HCT116 (cell line): ENCODE measurements at regions of chr9 and their contacts with region 1.

Region 1: DNA sequence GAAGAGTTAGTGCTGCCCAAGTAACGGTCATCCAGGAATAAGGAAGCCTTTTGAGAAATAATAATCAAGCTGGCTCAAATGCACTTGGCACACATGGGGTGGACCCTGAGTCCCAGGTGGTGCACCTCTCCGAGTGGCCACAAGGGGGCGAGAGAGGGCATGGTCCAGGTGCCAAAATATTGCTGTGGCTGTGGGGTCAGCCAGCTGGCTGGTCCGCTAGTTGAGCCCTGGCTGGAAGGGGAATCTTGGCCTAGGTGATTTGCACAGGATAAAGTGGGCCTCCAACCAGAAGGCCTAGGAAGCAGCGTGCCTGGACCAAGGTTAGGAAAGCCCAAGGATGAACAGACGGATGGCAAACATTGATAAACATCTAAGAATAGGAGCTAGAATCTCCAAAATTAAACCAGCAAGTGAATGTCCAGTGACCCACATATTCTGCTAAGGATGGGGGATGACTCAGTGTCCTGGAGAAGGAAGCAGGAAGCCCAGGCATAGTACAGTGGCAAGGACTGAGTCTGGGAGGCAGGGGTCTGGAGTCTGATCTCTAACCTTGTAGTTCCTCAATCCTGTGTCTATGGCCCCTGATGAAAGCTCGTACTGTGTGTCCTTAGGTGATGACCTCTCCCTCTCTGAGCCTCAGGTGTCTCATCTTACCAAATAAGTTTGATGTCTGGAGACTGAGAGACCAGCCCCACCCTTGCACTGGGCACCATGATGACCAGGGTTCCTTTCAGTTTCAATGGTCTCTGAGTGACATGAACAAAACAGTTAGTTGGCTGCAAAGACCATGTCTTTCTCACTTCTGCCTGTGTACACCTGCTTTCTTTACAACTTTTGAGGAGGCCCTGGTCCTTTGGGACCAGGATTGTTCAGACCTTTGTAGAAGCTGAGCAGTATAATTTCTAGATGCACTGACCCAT is 19.2 kb upstream of the SHB start:
- DNase-seq: peak; percentile 24
- ATAC-seq: peak; percentile 93
- H3K4me3 ChIP-seq: no peak overlapping the region
- H3K27ac ChIP-seq: no peak overlapping the region
- H3K4me1 ChIP-seq: peaks cover 0 to 2% of the 10 kb centered on the region in 2 experiments; a peak in 1 of 4 replicates
- H3K27me3 ChIP-seq: no peaks in the 10 kb centered on the region
- CTCF ChIP-seq: peak; percentile 78 to 99 (median 97)
- POLR2A ChIP-seq: no peak
- RAD21 ChIP-seq: peak; percentile 79

Region 2: GRCh38 chr9:37929441-37929895 is 158.8 kb before region 1 on chr9:
- CTCF ChIA-PET with region 1: no interaction called
- POLR2A ChIA-PET with region 1: no interaction called
- RAD21 ChIA-PET with region 1: no interaction called
- intact Hi-C with region 1: loop called (anchors 5 kb)
- DNase-seq: peak; percentile 58
- ATAC-seq: peak; percentile 80
- H3K4me3 ChIP-seq: no peak overlapping the region
- H3K27ac ChIP-seq: peak overlapping the region; percentile 77
- H3K4me1 ChIP-seq: peaks cover 46 to 62% of the 10 kb centered on the region in 2 experiments
- H3K27me3 ChIP-seq: no peaks in the 10 kb centered on the region
- CTCF ChIP-seq: no peak
- POLR2A ChIP-seq: no peak
- RAD21 ChIP-seq: no peak

Region 3: DNA sequence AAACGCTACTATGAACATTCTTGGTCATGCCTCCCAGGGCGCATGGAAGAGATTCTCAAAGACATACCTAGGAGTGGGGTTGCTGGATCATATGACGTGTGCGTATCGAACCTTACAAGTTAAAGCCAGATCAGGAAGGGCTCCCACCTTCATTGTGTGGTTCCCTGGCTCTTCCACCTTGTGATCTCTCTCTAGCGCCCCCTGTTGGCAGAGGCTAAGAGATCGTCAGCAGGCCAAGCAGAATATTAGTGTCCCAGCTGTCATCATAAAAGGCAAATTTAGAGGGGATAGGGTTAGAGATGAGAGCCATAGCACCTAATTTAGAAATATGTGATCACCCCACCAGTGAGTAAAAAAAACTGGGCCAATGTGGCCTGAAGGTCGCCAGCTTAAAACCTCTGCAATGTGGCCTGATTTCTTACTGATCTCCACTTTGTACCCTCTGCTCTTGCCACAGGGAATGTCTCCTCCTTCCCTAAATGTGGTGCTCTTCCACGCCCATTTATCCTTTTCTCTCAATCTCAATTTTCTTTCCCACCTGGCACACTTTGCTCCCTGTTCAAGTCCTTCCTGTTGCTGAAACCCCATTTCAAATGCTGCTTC is 72.4 kb after region 1 on chr9:
- CTCF ChIA-PET with region 1: interaction called, 15 read pairs
- POLR2A ChIA-PET with region 1: no interaction called
- RAD21 ChIA-PET with region 1: interaction called in 1 of 2 experiments, 4 read pairs
- intact Hi-C with region 1: loop called (anchors 5 kb)
- DNase-seq: peak; percentile 69
- ATAC-seq: peak; percentile 97
- H3K4me3 ChIP-seq: no peak overlapping the region
- H3K27ac ChIP-seq: no peak overlapping the region
- H3K4me1 ChIP-seq: 0 out of 4 replicates have a peak, but pooled peaks cover 0 to 2% of the 10 kb centered on the region in 2 experiments
- H3K27me3 ChIP-seq: no peaks in the 10 kb centered on the region
- CTCF ChIP-seq: peak; percentile 71 to 96 (median 92)
- POLR2A ChIP-seq: no peak
- RAD21 ChIP-seq: peak; percentile 70

Region 4: GRCh38 chr9:38263532-38263931 is 175.3 kb after region 1 on chr9:
- CTCF ChIA-PET with region 1: interaction called, 18 read pairs
- POLR2A ChIA-PET with region 1: no interaction called
- RAD21 ChIA-PET with region 1: interaction called in 1 of 2 experiments, 5 read pairs
- intact Hi-C with region 1: loop called (anchors 1 kb)
- DNase-seq: peak; percentile 7
- ATAC-seq: peak; percentile 46; the same call in 1 of the 2 replicates
- H3K4me3 ChIP-seq: no peak overlapping the region
- H3K27ac ChIP-seq: no peak overlapping the region
- H3K4me1 ChIP-seq: no peaks in the 10 kb centered on the region
- H3K27me3 ChIP-seq: no peaks in the 10 kb centered on the region
- CTCF ChIP-seq: peak in 2 of 3 experiments; percentile 40 to 72; a peak in 3 of 6 replicates
- POLR2A ChIP-seq: no peak
- RAD21 ChIP-seq: peak; percentile 86